ENCODE measurements at regions of chr1 and their contacts with region 1.

Region 1: DNA sequence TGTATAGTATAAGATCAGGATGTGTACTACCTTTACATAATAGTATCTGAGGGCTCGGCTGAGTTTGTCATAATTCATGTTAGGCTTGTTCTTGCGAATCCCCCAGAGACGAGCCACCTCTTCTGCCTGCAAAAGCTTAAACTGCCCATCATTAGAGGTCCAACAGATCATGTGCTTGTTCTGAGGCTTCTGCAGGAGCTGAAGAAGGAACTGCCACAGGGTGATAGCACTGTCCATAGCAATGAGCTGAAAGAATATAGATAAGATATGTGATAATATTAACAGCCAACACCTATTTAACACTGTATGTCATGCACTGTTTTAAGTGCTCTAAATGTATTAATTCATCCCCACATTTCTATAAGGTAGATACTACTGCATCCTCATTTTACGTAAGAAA is 8.2 kb downstream of the ELK4 start:
- DNase-seq: no peak
- ATAC-seq: no peak
- H3K4me3 ChIP-seq: no peak overlapping the region
- H3K27ac ChIP-seq: no peak overlapping the region
- H3K4me1 ChIP-seq: no peaks in the 10 kb centered on the region; a peak in 2 of 5 replicates
- H3K27me3 ChIP-seq: no peaks in the 10 kb centered on the region
- CTCF ChIP-seq: no peak
- EP300 ChIP-seq: no peak
- POLR2A ChIP-seq: no peak
- RAD21 ChIP-seq: no peak

Region 2: GRCh38 chr1:205610036-205610435 is 13.6 kb before region 1 on chr1:
- CTCF ChIA-PET with region 1: no interaction called
- POLR2A ChIA-PET with region 1: interaction called, 10 read pairs
- in situ Hi-C with region 1: no loop called
- intact Hi-C with region 1: no loop called
- DNase-seq: no peak
- ATAC-seq: no peak
- H3K4me3 ChIP-seq: no peak overlapping the region
- H3K27ac ChIP-seq: no peak overlapping the region
- H3K4me1 ChIP-seq: no peaks in the 10 kb centered on the region
- H3K27me3 ChIP-seq: no peaks in the 10 kb centered on the region
- CTCF ChIP-seq: no peak
- EP300 ChIP-seq: no peak
- POLR2A ChIP-seq: no peak
- RAD21 ChIP-seq: no peak

Measured in K562 (cell line).